ENCODE measurements at regions of chr11 and their contacts with region 1.

Region 1: DNA sequence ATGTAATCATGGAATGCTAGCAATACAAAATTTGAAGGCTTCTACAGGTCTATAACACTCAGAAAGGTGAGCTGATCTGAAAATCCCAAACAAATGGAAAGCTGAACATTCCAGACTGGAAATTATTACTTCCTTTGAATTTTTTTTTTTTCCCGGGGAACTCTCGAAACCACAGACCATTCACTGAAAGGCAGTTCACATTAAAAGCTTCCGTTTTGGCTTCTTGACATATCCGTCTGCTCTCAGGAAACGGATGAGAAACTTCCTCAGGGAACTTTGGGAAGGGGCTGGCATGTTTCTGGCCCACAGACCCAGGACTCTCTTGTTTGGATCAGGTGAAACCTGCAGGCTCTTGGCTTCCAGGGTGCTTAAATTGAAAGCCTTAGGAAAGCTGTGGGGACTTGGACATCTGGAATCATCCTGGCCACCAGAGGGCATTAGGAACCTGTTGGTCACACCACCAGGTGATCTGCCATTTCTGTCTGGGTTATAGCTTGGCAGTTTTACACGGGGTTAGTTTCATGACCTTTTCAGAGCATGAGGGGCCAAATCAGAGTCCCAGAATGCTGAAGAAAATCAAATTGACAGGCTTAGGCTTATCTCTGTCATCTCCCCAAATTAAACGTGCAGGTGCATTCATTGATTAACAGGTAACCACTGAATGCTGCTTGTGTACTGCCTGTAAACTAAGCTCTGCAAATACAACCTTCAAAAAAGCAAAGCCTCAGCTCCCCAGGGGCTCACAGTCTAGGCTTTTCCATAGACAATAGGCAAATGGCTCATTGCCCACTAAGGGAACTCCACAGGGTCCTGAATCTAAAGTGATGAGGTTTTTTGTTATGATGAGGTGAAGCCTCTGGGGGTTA is 22.7 kb upstream of the GRAMD1B start:
- DNase-seq: no peak
- ATAC-seq: peak; percentile 81
- H3K4me3 ChIP-seq: peak overlapping the region; percentile 58
- H3K27ac ChIP-seq: peak overlapping the region; percentile 75
- H3K4me1 ChIP-seq: peaks cover 57% of the 10 kb centered on the region
- H3K27me3 ChIP-seq: no peaks in the 10 kb centered on the region
- CTCF ChIP-seq: peak; percentile 79 to 81 (median 80)
- EP300 ChIP-seq: 0 out of 4 replicates have a peak, but pooled peaks of 1 of the 2 experiments have one; percentile 8
- POLR2A ChIP-seq: no peak
- RAD21 ChIP-seq: peak; percentile 83

Region 2: GRCh38 chr11:123062158-123062891 is 345.0 kb before region 1 on chr11:
- CTCF ChIA-PET with region 1: no interaction called
- POLR2A ChIA-PET with region 1: interaction called, 5 read pairs
- RAD21 ChIA-PET with region 1: no interaction called
- SMC1A ChIA-PET with region 1: no interaction called
- in situ Hi-C with region 1: no loop called
- intact Hi-C with region 1: loop called (anchors 10 kb)
- DNase-seq: peak; percentile 97
- ATAC-seq: peak; percentile 90
- H3K4me3 ChIP-seq: peak overlapping the region; percentile 73
- H3K27ac ChIP-seq: peak overlapping the region; percentile 100
- H3K4me1 ChIP-seq: peaks cover 14% of the 10 kb centered on the region; the same call in 1 of the 2 replicates
- H3K27me3 ChIP-seq: no peaks in the 10 kb centered on the region
- CTCF ChIP-seq: no peak
- EP300 ChIP-seq: no peak
- POLR2A ChIP-seq: no peak; the same call in none of the 2 replicates
- RAD21 ChIP-seq: no peak

Region 3: GRCh38 chr11:123308077-123308476 is 99.3 kb before region 1 on chr11:
- CTCF ChIA-PET with region 1: interaction called, 104 read pairs
- POLR2A ChIA-PET with region 1: interaction called, 3 read pairs
- RAD21 ChIA-PET with region 1: interaction called, 34 read pairs
- SMC1A ChIA-PET with region 1: interaction called, 32 read pairs
- in situ Hi-C with region 1: loop called (anchors 5 kb)
- intact Hi-C with region 1: no loop called
- DNase-seq: peak; percentile 19
- ATAC-seq: peak; percentile 33
- H3K4me3 ChIP-seq: no peak overlapping the region
- H3K27ac ChIP-seq: no peak overlapping the region
- H3K4me1 ChIP-seq: peaks cover 12% of the 10 kb centered on the region
- H3K27me3 ChIP-seq: no peaks in the 10 kb centered on the region; a peak in 1 of 4 replicates
- CTCF ChIP-seq: no peak
- EP300 ChIP-seq: no peak
- POLR2A ChIP-seq: no peak
- RAD21 ChIP-seq: no peak

Region 4: DNA sequence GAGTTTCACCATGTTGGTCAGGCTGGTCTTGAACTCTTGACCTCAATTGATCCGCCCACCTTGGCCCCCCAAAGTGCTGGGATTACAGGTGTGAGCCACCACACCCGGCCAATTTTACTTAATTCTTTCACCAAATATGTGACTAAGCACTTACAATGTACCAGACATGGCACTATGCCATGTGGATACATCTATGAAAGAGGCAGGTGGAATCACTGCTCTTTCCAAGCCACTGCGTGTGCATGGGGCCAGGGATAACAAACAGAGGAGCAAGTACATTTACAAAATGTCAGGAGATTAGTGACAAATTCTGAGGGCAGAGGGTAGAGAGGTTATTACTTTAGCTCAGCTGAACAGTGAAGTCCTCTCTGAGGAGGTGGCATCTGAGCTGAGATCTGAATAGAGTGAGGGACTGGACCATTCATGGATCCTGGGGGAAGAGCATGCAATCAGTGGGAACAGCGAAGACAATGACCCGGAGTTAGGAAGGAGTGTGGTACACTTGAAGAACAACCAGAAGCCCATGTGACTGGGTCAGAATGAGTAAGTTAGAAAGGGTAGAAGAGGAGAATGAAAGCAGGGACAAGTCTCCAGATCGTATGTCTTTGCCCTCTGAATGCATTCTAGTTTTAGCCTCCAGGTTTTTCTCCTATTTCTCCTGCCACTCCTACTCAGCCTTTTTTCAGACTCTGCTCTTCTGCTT is 15.6 kb before region 1 on chr11:
- CTCF ChIA-PET with region 1: interaction called, 58 read pairs
- POLR2A ChIA-PET with region 1: interaction called, 8 read pairs
- RAD21 ChIA-PET with region 1: interaction called, 34 read pairs
- SMC1A ChIA-PET with region 1: interaction called, 157 read pairs
- in situ Hi-C with region 1: no loop called
- intact Hi-C with region 1: no loop called
- DNase-seq: no peak
- ATAC-seq: peak; percentile 30
- H3K4me3 ChIP-seq: no peak overlapping the region
- H3K27ac ChIP-seq: peak overlapping the region; percentile 7
- H3K4me1 ChIP-seq: peaks cover 39% of the 10 kb centered on the region
- H3K27me3 ChIP-seq: no peaks in the 10 kb centered on the region
- CTCF ChIP-seq: no peak
- EP300 ChIP-seq: no peak
- POLR2A ChIP-seq: no peak
- RAD21 ChIP-seq: no peak

Region 5: DNA sequence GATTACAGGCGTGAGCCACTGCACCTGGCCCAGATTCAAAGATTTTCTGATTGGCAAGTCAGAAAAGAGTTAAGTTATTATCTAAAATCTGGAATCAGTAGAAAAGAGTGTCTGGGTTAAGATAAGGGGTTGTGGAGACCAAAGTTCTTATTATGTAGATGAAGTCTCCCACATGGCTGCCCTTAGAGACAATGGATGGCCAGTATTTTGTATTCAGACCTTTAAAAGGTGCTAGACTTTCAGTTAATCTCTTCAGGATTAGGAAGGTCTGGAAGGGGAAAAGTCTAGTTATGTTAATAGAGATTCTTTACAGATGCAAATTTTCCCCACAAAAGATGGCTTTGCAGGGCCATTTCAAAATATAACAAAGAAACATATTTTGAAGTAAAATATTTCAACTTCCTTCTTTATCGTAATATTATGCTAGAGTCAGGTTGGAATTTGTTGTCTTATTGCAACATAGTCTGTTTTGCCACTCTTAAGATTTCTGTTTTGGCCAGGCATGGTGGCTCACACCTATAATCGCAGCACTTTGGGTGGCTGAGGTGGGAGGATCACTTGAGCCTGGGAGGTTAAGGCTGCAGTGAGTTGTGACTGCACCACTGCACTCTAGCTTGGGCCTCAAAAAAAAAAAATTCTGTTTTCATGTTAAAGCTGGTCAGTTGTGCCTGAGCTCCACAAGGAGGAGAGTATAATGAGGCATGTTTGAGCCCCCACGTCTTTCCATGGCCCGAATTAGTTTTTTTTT is 36.7 kb after region 1 on chr11:
- CTCF ChIA-PET with region 1: interaction called, 137 read pairs
- POLR2A ChIA-PET with region 1: no interaction called
- RAD21 ChIA-PET with region 1: interaction called, 3 read pairs
- SMC1A ChIA-PET with region 1: interaction called, 10 read pairs
- in situ Hi-C with region 1: no loop called
- intact Hi-C with region 1: no loop called
- DNase-seq: no peak
- ATAC-seq: peak; percentile 13; the same call in 2 of the 3 replicates
- H3K4me3 ChIP-seq: no peak overlapping the region
- H3K27ac ChIP-seq: no peak overlapping the region
- H3K4me1 ChIP-seq: peaks cover 6% of the 10 kb centered on the region
- H3K27me3 ChIP-seq: no peaks in the 10 kb centered on the region
- CTCF ChIP-seq: no peak
- EP300 ChIP-seq: no peak
- POLR2A ChIP-seq: no peak
- RAD21 ChIP-seq: no peak

Region 6: GRCh38 chr11:123469089-123469488 is 61.7 kb after region 1 on chr11:
- CTCF ChIA-PET with region 1: interaction called, 349 read pairs
- POLR2A ChIA-PET with region 1: interaction called, 16 read pairs
- RAD21 ChIA-PET with region 1: interaction called, 212 read pairs
- SMC1A ChIA-PET with region 1: interaction called, 244 read pairs
- in situ Hi-C with region 1: no loop called
- intact Hi-C with region 1: no loop called
- DNase-seq: no peak
- ATAC-seq: no peak
- H3K4me3 ChIP-seq: no peak overlapping the region
- H3K27ac ChIP-seq: no peak overlapping the region
- H3K4me1 ChIP-seq: peaks cover 3% of the 10 kb centered on the region; the same call in 1 of the 2 replicates
- H3K27me3 ChIP-seq: no peaks in the 10 kb centered on the region
- CTCF ChIP-seq: no peak
- EP300 ChIP-seq: no peak
- POLR2A ChIP-seq: no peak
- RAD21 ChIP-seq: no peak

Region 7: GRCh38 chr11:123519055-123519796 is 111.9 kb after region 1 on chr11:
- CTCF ChIA-PET with region 1: interaction called, 28 read pairs
- POLR2A ChIA-PET with region 1: interaction called, 4 read pairs
- RAD21 ChIA-PET with region 1: interaction called, 7 read pairs
- SMC1A ChIA-PET with region 1: interaction called, 6 read pairs
- in situ Hi-C with region 1: no loop called
- intact Hi-C with region 1: no loop called
- DNase-seq: no peak
- ATAC-seq: peak; percentile 18
- H3K4me3 ChIP-seq: no peak overlapping the region
- H3K27ac ChIP-seq: no peak overlapping the region
- H3K4me1 ChIP-seq: peaks cover 25% of the 10 kb centered on the region
- H3K27me3 ChIP-seq: no peaks in the 10 kb centered on the region
- CTCF ChIP-seq: no peak
- EP300 ChIP-seq: no peak
- POLR2A ChIP-seq: no peak
- RAD21 ChIP-seq: no peak

Region 8: DNA sequence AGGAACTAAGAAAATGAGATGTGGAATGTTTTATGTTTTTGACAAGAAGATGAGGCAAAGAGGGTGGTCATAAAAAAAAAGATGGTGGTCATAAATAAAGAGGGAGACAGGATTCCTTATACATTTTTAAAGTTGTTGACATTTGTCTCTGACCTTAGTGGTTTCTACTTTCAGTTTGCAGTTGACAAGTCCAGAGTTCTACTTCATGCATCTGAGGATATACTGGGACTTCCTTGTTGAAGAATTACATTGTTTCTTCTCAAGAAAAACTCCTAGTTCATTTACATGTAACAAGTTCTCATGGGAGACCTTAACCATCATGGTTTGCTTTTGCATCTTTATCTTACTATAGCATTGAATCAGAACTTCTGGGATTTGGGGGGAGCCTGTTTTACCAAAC is 345.7 kb after region 1 on chr11:
- CTCF ChIA-PET with region 1: no interaction called
- POLR2A ChIA-PET with region 1: no interaction called
- RAD21 ChIA-PET with region 1: no interaction called
- SMC1A ChIA-PET with region 1: no interaction called
- in situ Hi-C with region 1: no loop called
- intact Hi-C with region 1: no loop called
- DNase-seq: no peak
- ATAC-seq: no peak
- H3K4me3 ChIP-seq: 0 out of 2 replicates have a peak overlapping the region, but pooled peaks have one; percentile 0
- H3K27ac ChIP-seq: no peak overlapping the region
- H3K4me1 ChIP-seq: no peaks in the 10 kb centered on the region
- H3K27me3 ChIP-seq: no peaks in the 10 kb centered on the region; a peak in 1 of 4 replicates
- CTCF ChIP-seq: no peak
- EP300 ChIP-seq: no peak
- POLR2A ChIP-seq: no peak
- RAD21 ChIP-seq: no peak